ENCODE measurements at regions of chr12 and their contacts with region 1.

Region 1: GRCh38 chr12:14995583-14996425 is 23.0 kb downstream of the PDE6H start:
- DNase-seq: peak in 1 of 2 donors; percentile 89
- H3K4me3 ChIP-seq: no peak overlapping the region
- H3K27ac ChIP-seq: no peak overlapping the region
- H3K4me1 ChIP-seq: peaks cover 0 to 16% (median 6%) of the 10 kb centered on the region in 4 donors
- H3K27me3 ChIP-seq: no peaks in the 10 kb centered on the region
- CTCF ChIP-seq: peak in 5 of 7 experiments; percentile 19 to 76 (median 58)
- EP300 ChIP-seq: no peak
- POLR2A ChIP-seq: no peak

Region 2: GRCh38 chr12:14845350-14845750 is 150.5 kb before region 1 on chr12:
- intact Hi-C with region 1: loop called (anchors 5 kb)
- DNase-seq: peak; percentile 50 to 82
- H3K4me3 ChIP-seq: no peak overlapping the region
- H3K27ac ChIP-seq: peak overlapping the region in 1 of 5 donors; percentile 28
- H3K4me1 ChIP-seq: peaks cover 10 to 56% (median 40%) of the 10 kb centered on the region in 4 donors
- H3K27me3 ChIP-seq: no peaks in the 10 kb centered on the region
- CTCF ChIP-seq: peak in 5 of 7 experiments; percentile 65 to 87 (median 77)
- EP300 ChIP-seq: no peak
- POLR2A ChIP-seq: no peak

Region 3: GRCh38 chr12:15088105-15088504 is 92.3 kb after region 1 on chr12:
- intact Hi-C with region 1: no loop called
- DNase-seq: no peak
- H3K4me3 ChIP-seq: no peak overlapping the region
- H3K27ac ChIP-seq: no peak overlapping the region
- H3K4me1 ChIP-seq: peaks cover 0 to 5% (median 0%) of the 10 kb centered on the region in 4 donors
- H3K27me3 ChIP-seq: no peaks in the 10 kb centered on the region
- CTCF ChIP-seq: no peak
- EP300 ChIP-seq: no peak
- POLR2A ChIP-seq: no peak

Measured in stomach (tissue), 19 donors.